Left ventricle myocardium inferior (tissue), 1 donor: ENCODE measurements at regions of chr9 and their contacts with region 1.

Region 1: DNA sequence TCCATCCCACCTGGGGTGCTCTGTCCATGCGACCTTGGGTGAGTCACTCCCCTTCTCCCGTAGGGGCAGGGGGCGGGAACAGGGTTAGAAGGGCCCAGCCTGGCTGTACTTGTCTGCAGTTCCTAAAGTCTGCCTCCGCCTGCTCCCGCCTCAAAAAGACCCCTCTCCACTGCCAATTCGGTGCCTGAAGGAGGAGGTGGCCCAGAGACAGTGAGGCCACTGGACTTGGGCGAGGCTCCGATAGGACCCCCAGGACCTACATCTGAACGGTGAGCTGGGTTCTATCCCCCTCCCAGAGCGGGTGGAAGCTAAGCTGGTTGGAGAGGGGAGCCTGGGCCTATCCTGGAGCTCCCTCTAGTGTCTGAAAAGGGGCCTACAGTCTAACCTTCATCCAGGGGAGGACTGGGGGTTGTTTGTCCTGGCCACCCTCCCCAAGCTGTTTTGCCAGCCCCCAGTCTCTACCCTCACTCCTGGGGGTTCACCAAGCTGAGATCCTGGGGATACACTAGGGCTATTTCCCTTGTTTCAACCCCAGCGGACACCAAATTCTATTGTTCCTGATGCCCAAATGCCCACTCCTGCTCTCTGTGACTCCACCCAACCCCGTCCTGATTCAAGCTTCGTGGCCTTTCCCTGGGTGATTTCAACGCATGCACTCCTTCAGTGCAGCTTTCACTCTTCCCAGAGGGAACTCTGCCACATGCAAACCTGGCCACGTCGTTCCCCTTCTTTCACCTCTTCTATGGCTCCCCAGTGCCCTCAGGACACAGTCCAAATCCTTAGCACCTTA is 6.1 kb upstream of the CRB2 start:
- DNase-seq: no peak
- H3K4me3 ChIP-seq: no peak overlapping the region
- H3K27ac ChIP-seq: no peak overlapping the region
- H3K4me1 ChIP-seq: peaks cover 6% of the 10 kb centered on the region
- H3K27me3 ChIP-seq: peaks cover 58% of the 10 kb centered on the region
- CTCF ChIP-seq: no peak

Region 2: DNA sequence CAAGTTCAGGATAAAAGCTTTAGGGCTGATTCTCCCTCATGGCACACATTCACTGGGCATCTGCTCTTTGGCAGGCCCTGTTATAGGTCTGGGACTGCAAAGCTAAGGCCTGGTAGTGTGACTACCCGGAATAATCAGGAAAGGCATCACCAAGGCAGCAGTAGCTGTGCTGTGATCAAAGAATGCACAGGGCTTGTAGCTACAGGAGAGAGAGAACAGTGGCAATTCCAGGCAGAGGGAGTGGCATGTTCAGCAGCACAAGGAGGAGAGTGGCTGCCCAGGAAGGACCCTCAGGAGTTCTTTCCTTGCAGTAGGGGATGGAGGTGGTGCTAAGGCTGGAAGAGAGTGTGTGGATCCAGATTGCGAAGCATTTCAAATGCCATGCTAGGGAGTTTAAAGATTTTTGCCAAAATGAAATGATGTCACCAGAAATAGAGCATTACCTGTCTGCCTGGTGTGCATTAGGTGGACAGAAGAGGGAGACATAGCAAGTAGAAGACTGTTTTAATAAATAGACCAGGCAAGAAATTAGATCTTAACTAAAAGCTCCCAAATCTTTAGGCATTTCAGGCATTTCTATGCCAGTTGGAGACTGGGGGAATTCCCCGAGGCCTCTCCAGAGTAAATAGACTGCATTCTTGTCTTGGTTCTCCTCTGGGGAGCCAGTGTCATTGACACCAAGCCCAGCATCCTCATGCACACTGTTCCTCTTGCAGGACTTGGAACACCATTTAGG is 247.3 kb before region 1 on chr9:
- intact Hi-C with region 1: loop called (anchors 10 kb)
- DNase-seq: no peak
- H3K4me3 ChIP-seq: no peak overlapping the region
- H3K27ac ChIP-seq: no peak overlapping the region
- H3K4me1 ChIP-seq: no peaks in the 10 kb centered on the region
- H3K27me3 ChIP-seq: no peaks in the 10 kb centered on the region
- CTCF ChIP-seq: peak; percentile 33

Region 3: GRCh38 chr9:123291736-123292135 is 58.1 kb before region 1 on chr9:
- intact Hi-C with region 1: no loop called
- DNase-seq: no peak
- H3K4me3 ChIP-seq: no peak overlapping the region
- H3K27ac ChIP-seq: no peak overlapping the region
- H3K4me1 ChIP-seq: no peaks in the 10 kb centered on the region
- H3K27me3 ChIP-seq: peaks cover 7% of the 10 kb centered on the region
- CTCF ChIP-seq: no peak

Region 4: DNA sequence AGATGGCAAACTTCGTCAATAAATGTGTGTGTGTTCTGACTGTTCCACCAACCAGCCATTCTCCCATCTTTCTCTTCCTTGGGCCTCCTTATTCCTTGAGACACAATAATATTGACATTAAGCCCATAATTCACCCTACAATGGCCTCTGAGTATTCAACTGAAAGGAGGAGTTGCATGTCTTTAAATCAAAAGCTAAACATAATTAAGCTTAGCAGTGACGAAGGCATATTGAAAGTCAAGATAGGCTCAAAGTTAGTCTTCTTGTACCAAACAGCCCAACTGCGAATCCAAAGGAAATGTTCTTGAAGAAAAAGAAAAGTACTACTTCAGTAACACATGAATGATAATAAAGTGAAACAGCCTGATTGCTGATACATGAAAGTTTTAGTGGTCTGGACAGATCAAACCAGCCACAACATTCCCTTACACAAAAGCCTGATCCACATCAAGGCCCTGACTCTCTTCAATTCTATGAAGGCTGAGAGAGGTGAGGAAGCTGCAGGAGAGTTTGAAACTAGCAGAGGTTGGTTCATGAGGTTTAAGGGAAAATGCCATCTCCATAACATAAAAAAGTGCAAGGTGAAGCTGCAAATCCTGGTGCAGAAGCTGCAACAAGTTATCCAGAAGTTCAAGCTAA is 498.7 kb after region 1 on chr9:
- intact Hi-C with region 1: no loop called
- DNase-seq: no peak
- H3K4me3 ChIP-seq: no peak overlapping the region
- H3K27ac ChIP-seq: no peak overlapping the region
- H3K4me1 ChIP-seq: no peaks in the 10 kb centered on the region
- H3K27me3 ChIP-seq: no peaks in the 10 kb centered on the region
- CTCF ChIP-seq: no peak